ENCODE measurements at regions of chr12 and their contacts with region 1.

Region 1: GRCh38 chr12:131132118-131132892 is 178.6 kb downstream of the ADGRD1 start:
- DNase-seq: peak; percentile 80
- H3K4me3 Mint-ChIP-seq: no peak overlapping the region
- H3K27ac Mint-ChIP-seq: no peak overlapping the region
- H3K4me1 Mint-ChIP-seq: no peaks in the 10 kb centered on the region
- H3K27me3 Mint-ChIP-seq: no peaks in the 10 kb centered on the region

Region 2: GRCh38 chr12:130761537-130762318 is 370.6 kb before region 1 on chr12:
- CTCF ChIA-PET with region 1: no interaction called
- intact Hi-C with region 1: loop called (anchors 5 kb)
- DNase-seq: peak; percentile 79
- H3K4me3 Mint-ChIP-seq: peak overlapping the region; percentile 58
- H3K27ac Mint-ChIP-seq: no peak overlapping the region
- H3K4me1 Mint-ChIP-seq: no peaks in the 10 kb centered on the region
- H3K27me3 Mint-ChIP-seq: peaks cover 8% of the 10 kb centered on the region

Region 3: GRCh38 chr12:130826149-130826801 is 306.0 kb before region 1 on chr12:
- CTCF ChIA-PET with region 1: interaction called, 17 read pairs
- intact Hi-C with region 1: loop called (anchors 1 kb)
- DNase-seq: peak; percentile 70
- H3K4me3 Mint-ChIP-seq: no peak overlapping the region
- H3K27ac Mint-ChIP-seq: no peak overlapping the region
- H3K4me1 Mint-ChIP-seq: peaks cover 10% of the 10 kb centered on the region
- H3K27me3 Mint-ChIP-seq: no peaks in the 10 kb centered on the region

Region 4: GRCh38 chr12:131116391-131117117 is 15.8 kb before region 1 on chr12:
- CTCF ChIA-PET with region 1: interaction called, 15 read pairs
- intact Hi-C with region 1: no loop called
- DNase-seq: no peak
- H3K4me3 Mint-ChIP-seq: no peak overlapping the region
- H3K27ac Mint-ChIP-seq: no peak overlapping the region
- H3K4me1 Mint-ChIP-seq: no peaks in the 10 kb centered on the region
- H3K27me3 Mint-ChIP-seq: peaks cover 2% of the 10 kb centered on the region

Region 5: GRCh38 chr12:131371401-131372170 is 239.3 kb after region 1 on chr12:
- CTCF ChIA-PET with region 1: no interaction called
- intact Hi-C with region 1: no loop called
- DNase-seq: no peak
- H3K4me3 Mint-ChIP-seq: no peak overlapping the region
- H3K27ac Mint-ChIP-seq: no peak overlapping the region
- H3K4me1 Mint-ChIP-seq: no peaks in the 10 kb centered on the region
- H3K27me3 Mint-ChIP-seq: peaks cover 2% of the 10 kb centered on the region

Measured in activated naive CD4-positive, alpha-beta T cell treated with anti-CD3 and anti-CD28 coated beads for 36 hours (primary cell).